ENCODE measurements at regions of chr18 and their contacts with region 1.

Region 1: DNA sequence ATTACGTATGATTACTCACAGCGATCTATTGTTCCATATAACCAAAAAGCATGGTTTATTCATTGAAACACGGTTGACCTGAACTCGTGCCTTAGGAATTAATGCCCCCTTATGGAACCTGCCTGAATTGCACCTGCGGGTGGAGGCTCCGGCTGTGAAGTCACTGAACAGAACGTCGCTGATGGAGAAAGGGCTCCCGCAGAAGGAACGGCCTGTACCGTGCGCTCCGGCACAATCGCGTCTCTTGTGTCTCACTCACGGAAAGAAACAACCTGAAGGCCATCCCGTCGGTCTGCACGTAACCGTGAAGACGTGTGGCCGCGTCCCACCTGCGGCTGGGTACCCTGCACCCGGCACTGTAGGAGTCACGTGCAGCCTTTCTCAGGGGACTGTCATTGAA is 133.1 kb downstream of the NFATC1 start:
- DNase-seq: peak; percentile 93
- H3K4me3 Mint-ChIP-seq: no peak overlapping the region
- H3K27ac Mint-ChIP-seq: no peak overlapping the region
- H3K4me1 Mint-ChIP-seq: peaks cover 16% of the 10 kb centered on the region
- H3K27me3 Mint-ChIP-seq: no peaks in the 10 kb centered on the region

Region 2: GRCh38 chr18:79378542-79379250 is 150.2 kb before region 1 on chr18:
- intact Hi-C with region 1: loop called (anchors 1 kb)
- DNase-seq: peak; percentile 95
- H3K4me3 Mint-ChIP-seq: peak overlapping the region; percentile 37
- H3K27ac Mint-ChIP-seq: no peak overlapping the region
- H3K4me1 Mint-ChIP-seq: peaks cover 9% of the 10 kb centered on the region
- H3K27me3 Mint-ChIP-seq: no peaks in the 10 kb centered on the region

Measured in activated CD4-positive, alpha-beta T cell treated with anti-CD3 and anti-CD28 coated beads, Interleukin-2, amount 10 ng/mL, durations not matched to agents 24 days and 14 days (primary cell).